ENCODE measurements at regions of chr19 and their contacts with region 1.

Region 1: DNA sequence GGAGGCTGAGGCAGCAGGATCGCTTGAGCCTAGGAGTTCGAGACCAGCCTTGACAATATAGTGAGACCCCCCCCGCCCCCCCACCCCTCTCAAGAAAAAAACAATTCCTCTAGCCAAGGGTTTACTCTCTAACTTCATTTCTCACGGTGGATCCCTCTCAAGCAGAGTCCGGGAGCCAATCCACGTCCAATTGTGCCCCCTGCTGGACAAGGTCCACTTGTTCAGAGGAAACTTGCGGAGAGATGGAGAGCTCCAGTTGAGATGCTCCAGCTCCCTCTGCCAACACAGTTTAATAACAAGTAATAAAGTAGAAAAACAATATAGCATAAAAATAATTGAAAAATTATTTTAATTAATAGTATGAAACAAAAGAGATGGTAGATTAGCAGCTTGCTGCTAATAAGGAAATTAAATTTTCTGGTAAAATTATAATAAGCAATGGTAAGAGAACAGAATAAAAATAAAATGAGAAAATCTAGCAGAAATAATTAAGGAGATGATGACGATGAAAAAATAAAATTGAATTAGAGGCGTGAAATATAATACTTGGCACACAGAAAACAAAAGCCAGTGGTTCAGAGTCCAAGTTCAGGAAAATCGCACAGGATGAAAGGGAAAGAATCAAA is 14.5 kb upstream of the SIGLEC14 start:
- DNase-seq: peak in 1 of 2 experiments; percentile 75
- H3K4me3 ChIP-seq: no peak overlapping the region
- H3K27ac ChIP-seq: no peak overlapping the region
- H3K4me1 ChIP-seq: no peaks in the 10 kb centered on the region
- H3K27me3 ChIP-seq: peaks cover 0 to 2% (median 0%) of the 10 kb centered on the region in 4 experiments; a peak in 1 of 7 replicates
- CTCF ChIP-seq: peak; percentile 60 to 77 (median 64)
- EP300 ChIP-seq: no peak
- POLR2A ChIP-seq: no peak
- RAD21 ChIP-seq: peak; percentile 73 to 83

Region 2: DNA sequence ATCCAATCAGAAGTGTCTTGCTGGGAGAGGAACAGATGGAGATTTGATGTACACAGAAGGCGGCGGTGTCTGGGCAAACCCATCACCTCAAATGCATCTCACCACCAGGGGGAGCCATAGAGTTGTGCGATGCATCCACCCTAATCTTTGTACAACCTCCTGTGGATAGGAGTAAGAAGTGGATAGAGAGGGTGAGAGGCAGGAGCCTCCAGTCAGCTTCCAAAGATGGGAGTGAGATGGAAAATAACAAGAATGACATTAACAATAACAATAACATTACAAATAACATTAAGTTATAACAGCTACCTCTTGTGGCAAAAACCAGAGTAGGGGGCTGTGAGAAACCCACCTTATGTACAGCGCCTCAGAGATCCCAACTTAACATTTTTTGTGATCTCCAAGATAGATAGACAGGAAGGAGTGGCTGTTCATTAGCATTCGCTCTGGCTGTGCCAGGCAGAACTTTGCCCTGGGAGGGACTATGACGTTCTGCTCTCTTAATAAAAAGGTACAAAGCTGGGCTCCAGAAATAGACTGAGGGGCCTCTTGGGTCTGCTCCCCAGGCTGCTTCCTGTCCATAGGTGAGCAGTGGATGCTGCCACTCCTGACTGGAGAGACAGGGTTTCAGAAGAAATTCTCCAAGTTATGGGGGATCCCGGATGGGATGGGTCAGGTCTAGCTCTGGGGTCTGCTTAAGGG is 187.9 kb before region 1 on chr19:
- CTCF ChIA-PET with region 1: interaction called, 83 read pairs
- POLR2A ChIA-PET with region 1: no interaction called
- DNase-seq: peak; percentile 17 to 86
- H3K4me3 ChIP-seq: no peak overlapping the region
- H3K27ac ChIP-seq: no peak overlapping the region
- H3K4me1 ChIP-seq: no peaks in the 10 kb centered on the region
- H3K27me3 ChIP-seq: no peaks in the 10 kb centered on the region; a peak in 1 of 7 replicates
- CTCF ChIP-seq: peak; percentile 76 to 81 (median 78)
- EP300 ChIP-seq: no peak
- POLR2A ChIP-seq: no peak
- RAD21 ChIP-seq: peak; percentile 78

Region 3: GRCh38 chr19:51607920-51608562 is 53.0 kb before region 1 on chr19:
- CTCF ChIA-PET with region 1: interaction called, 10 read pairs
- POLR2A ChIA-PET with region 1: no interaction called
- DNase-seq: peak; percentile 70 to 91
- H3K4me3 ChIP-seq: no peak overlapping the region
- H3K27ac ChIP-seq: no peak overlapping the region
- H3K4me1 ChIP-seq: no peaks in the 10 kb centered on the region
- H3K27me3 ChIP-seq: no peaks in the 10 kb centered on the region
- CTCF ChIP-seq: peak; percentile 91 to 92 (median 92)
- EP300 ChIP-seq: no peak
- POLR2A ChIP-seq: no peak
- RAD21 ChIP-seq: peak; percentile 60 to 68

Region 4: GRCh38 chr19:51644636-51645271 is 16.3 kb before region 1 on chr19:
- CTCF ChIA-PET with region 1: interaction called, 13 read pairs
- POLR2A ChIA-PET with region 1: interaction called, 3 read pairs
- DNase-seq: no peak
- H3K4me3 ChIP-seq: no peak overlapping the region
- H3K27ac ChIP-seq: no peak overlapping the region
- H3K4me1 ChIP-seq: no peaks in the 10 kb centered on the region
- H3K27me3 ChIP-seq: no peaks in the 10 kb centered on the region
- CTCF ChIP-seq: no peak
- EP300 ChIP-seq: no peak
- POLR2A ChIP-seq: no peak
- RAD21 ChIP-seq: no peak

Region 5: DNA sequence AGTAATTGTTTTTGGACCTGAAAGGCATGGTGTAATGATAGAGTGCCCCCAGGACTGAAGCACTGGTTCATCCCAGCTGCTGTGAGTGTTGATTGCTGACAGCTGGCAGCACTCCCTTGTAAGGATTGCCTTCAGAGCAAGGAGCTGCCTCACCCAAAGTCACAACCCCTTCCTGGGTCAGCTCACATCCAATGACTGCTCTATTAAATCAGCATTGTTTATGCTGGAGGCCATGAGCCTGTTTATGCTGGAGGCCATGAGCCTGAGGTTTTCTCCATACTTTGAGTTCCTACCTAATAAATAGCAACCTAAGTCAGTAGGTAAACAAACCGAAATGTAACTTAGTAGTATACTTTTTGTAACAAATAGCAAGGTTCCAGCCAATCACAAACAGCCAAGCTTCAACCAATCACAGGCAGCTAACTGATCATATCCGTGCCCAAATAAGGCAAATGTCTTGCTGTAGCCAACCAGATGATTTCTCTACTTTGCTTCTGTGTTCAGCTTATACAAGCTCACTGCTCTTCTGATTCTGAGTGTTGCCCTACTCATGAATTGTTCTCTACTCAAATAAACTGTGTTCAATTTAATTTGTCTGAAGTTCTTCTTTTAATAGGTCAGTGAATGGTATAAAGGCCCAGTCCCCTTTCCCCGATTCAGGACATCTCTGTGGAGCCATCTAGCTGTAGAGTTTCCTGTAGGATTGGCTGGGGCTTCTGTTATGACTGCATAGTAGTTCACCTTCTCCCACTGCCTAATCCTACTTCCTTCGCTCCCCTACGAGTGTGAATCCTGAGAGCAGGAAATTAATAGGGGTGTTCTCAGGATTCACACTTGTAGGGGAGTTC is 20.5 kb after region 1 on chr19:
- CTCF ChIA-PET with region 1: interaction called, 29 read pairs
- POLR2A ChIA-PET with region 1: no interaction called
- DNase-seq: no peak
- H3K4me3 ChIP-seq: no peak overlapping the region
- H3K27ac ChIP-seq: no peak overlapping the region
- H3K4me1 ChIP-seq: no peaks in the 10 kb centered on the region
- H3K27me3 ChIP-seq: 0 out of 7 replicates have a peak, but pooled peaks cover 0 to 4% (median 0%) of the 10 kb centered on the region in 4 experiments
- CTCF ChIP-seq: no peak
- EP300 ChIP-seq: no peak
- POLR2A ChIP-seq: no peak
- RAD21 ChIP-seq: no peak